ENCODE measurements at regions of chr2 and their contacts with region 1.

Region 1: GRCh38 chr2:231925303-231926179 is 655 bp downstream of the NPPC start:
- DNase-seq: peak; percentile 86 to 95
- H3K4me3 ChIP-seq: peak overlapping the region; percentile 42 to 56 (median 46)
- H3K27ac ChIP-seq: no peak overlapping the region
- H3K4me1 ChIP-seq: peaks cover 24 to 36% (median 29%) of the 10 kb centered on the region in 4 donors
- H3K27me3 ChIP-seq: peaks cover 10 to 93% (median 56%) of the 10 kb centered on the region in 3 donors
- CTCF ChIP-seq: peak in 5 of 7 experiments; percentile 45 to 98 (median 85)
- EP300 ChIP-seq: no peak
- POLR2A ChIP-seq: no peak

Region 2: DNA sequence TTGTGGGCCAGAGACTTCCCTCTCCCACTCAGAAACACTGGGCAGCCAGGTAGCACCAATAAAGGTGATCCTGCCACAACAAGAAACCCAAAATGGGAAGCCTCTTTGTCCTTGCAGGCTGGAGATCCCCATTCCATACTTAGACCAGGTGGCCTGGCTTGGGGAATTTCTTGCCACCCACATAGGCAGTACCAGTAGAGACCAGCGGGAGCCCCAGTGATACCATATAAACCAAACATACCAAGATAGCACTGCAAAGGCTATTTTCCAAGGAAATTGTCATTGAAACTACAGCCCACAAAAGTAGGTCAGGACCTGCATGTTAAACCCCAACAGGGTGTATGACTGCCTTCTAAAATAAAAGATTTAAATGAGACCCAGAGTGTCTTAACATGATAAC is 207.5 kb after region 1 on chr2:
- intact Hi-C with region 1: loop called (anchors 10 kb)
- DNase-seq: no peak
- H3K4me3 ChIP-seq: no peak overlapping the region
- H3K27ac ChIP-seq: no peak overlapping the region
- H3K4me1 ChIP-seq: peaks cover 0 to 14% (median 2%) of the 10 kb centered on the region in 4 donors
- H3K27me3 ChIP-seq: no peaks in the 10 kb centered on the region
- CTCF ChIP-seq: no peak
- EP300 ChIP-seq: no peak
- POLR2A ChIP-seq: no peak

Region 3: DNA sequence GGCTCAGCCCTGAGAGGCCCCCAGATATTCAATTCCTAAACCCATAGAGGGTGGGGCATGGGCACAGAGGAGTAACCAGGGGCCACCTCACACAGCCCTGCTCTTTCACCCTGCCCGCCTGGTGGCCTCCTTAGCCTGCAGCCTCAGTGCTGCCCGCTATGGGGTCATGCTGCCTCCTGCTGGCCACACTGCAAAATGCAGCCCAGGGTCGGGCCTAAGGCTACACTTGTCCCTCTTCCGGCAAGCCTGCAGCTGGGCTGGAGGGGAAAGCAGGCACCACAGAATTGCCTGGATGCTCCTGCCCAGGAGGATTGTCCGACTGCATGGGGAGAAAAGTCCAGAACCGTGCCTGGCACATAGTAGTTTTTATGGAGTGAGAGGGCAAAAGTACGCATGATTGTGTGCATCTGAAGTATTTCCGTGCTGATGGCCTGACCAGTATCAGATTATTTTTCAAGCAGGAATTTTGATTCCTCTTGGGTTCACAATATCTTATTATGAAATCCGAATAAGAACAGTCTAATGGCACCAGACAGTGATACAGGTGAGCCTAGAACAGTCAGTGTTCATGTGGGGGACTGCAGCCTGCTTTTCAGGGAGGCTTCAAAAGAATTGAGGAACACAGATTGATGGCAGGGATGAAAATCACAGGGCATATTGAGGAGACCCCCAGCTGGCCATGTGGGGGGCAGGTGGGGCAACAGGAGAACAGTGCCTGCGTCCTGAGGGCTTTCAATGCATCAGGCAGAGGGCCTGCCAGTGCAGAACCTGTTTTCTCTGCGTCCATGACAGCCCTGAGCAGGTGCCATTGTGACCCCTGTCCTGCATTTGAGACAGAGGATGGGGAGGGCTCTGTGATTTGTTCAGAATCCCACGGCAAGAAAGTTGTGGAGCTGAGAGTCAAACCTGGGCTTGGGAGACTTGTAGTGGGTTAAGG is 401.8 kb after region 1 on chr2:
- intact Hi-C with region 1: loop called (anchors 10 kb)
- DNase-seq: peak; percentile 77 to 87
- H3K4me3 ChIP-seq: no peak overlapping the region
- H3K27ac ChIP-seq: no peak overlapping the region
- H3K4me1 ChIP-seq: peaks cover 0 to 3% (median 0%) of the 10 kb centered on the region in 4 donors
- H3K27me3 ChIP-seq: no peaks in the 10 kb centered on the region
- CTCF ChIP-seq: peak in 5 of 7 experiments; percentile 66 to 86 (median 75)
- EP300 ChIP-seq: no peak
- POLR2A ChIP-seq: no peak